CD14-positive monocyte (primary cell): ENCODE measurements at regions of chr2 and their contacts with region 1.

Region 1: DNA sequence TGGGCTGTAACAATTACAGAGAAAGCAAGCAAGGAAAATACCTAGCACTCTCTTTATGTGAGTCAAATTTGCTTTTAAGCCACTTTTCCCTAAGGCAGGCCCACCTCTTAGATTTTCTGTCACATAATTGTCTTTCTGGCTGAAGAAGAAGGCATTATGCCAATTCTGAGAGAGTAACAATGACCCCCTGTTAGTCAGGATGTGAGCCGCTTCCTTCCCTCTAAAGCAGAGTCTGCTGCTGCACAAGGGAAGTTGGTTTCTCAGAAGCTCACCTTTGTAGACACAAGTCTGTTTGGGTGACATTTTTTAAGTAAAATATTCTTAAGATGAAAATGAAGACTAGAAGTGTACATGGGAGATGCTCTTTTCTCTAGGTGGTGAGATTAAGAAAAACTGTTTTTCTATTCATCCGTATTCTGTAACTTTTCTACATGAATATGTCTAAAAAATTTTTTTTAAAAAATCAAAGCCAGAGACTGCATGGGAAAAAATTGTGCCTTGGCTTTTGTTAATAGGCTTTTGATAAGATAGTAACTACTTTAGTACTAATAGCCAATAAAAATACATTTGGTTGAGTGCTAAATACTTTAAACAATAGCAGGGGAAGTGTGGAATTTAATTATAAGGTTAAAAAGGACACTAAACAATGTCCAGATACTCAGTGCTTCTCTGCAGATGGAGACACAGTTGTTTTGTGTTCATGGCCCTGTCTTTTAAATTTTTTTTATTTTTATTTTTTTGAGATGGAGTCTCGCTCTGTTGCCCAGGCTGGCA is 33.4 kb upstream of the VPS54 start:
- DNase-seq: peak in 1 of 3 donors; percentile 12
- H3K4me3 ChIP-seq: no peak overlapping the region
- H3K4me3 Mint-ChIP-seq: no peak overlapping the region
- H3K27ac ChIP-seq: no peak overlapping the region
- H3K27ac Mint-ChIP-seq: no peak overlapping the region
- H3K4me1 ChIP-seq: peaks cover 7 to 9% of the 10 kb centered on the region in 2 donors
- H3K4me1 Mint-ChIP-seq: peaks cover 11% of the 10 kb centered on the region
- H3K27me3 ChIP-seq: no peaks in the 10 kb centered on the region
- H3K27me3 Mint-ChIP-seq: peaks cover 0 to 3% (median 0%) of the 10 kb centered on the region in 3 donors
- CTCF ChIP-seq: no peak

Region 2: DNA sequence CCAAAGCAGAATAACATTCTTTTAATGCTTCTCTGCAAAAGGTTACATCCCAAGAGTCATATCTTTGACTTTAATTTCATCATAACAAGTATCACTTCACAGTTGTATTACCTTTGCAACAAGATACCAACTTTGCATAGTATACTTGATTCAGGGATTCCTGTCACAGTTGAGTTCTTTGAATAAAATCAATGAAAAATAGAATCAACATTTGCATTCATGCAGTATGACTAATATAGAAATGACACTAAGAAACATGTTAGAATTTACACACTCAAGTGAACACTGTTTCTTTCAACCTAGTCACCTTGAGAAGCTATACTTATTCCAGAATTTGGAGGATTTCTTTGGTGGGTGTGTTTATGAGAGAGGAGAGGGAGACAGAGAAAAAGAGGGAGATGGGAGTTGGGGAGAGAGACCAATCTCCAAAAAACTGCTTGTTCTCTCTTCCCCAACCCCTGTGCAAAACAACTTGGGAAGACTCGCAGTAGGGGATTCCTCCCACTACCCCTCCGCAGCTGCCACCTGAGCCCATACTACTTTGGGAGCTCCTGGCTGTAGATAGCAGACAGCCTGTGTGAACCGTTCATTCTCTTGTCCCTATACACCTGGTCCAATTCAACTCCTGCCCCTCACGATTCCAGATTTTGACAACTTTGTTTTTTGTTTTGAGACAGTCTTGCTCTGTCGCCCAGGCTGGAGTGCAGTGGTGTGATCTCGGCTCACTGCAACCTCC is 33.9 kb after region 1 on chr2:
- intact Hi-C with region 1: no loop called
- DNase-seq: no peak
- H3K4me3 ChIP-seq: no peak overlapping the region
- H3K4me3 Mint-ChIP-seq: no peak overlapping the region
- H3K27ac ChIP-seq: no peak overlapping the region
- H3K27ac Mint-ChIP-seq: peak overlapping the region in 1 of 7 donors; percentile 78
- H3K4me1 ChIP-seq: no peaks in the 10 kb centered on the region
- H3K4me1 Mint-ChIP-seq: peaks cover 2% of the 10 kb centered on the region
- H3K27me3 ChIP-seq: no peaks in the 10 kb centered on the region
- H3K27me3 Mint-ChIP-seq: peaks cover 0 to 3% (median 0%) of the 10 kb centered on the region in 3 donors
- CTCF ChIP-seq: no peak

Region 3: GRCh38 chr2:64488050-64488974 is 435.7 kb after region 1 on chr2:
- intact Hi-C with region 1: loop called (anchors 5 to 10 kb)
- DNase-seq: peak; percentile 45 to 63 (median 58)
- H3K4me3 ChIP-seq: no peak overlapping the region
- H3K4me3 Mint-ChIP-seq: no peak overlapping the region
- H3K27ac ChIP-seq: no peak overlapping the region
- H3K27ac Mint-ChIP-seq: peak overlapping the region in 1 of 7 donors; percentile 65
- H3K4me1 ChIP-seq: peaks cover 0 to 4% of the 10 kb centered on the region in 2 donors
- H3K4me1 Mint-ChIP-seq: peaks cover 8% of the 10 kb centered on the region
- H3K27me3 ChIP-seq: no peaks in the 10 kb centered on the region
- H3K27me3 Mint-ChIP-seq: peaks cover 1 to 8% (median 4%) of the 10 kb centered on the region in 3 donors
- CTCF ChIP-seq: peak; percentile 99